Activated CD4-positive, alpha-beta memory T cell treated with anti-CD3 and anti-CD28 coated beads for 36 hours (primary cell): ENCODE measurements at regions of chr9 and their contacts with region 1.

Region 1: DNA sequence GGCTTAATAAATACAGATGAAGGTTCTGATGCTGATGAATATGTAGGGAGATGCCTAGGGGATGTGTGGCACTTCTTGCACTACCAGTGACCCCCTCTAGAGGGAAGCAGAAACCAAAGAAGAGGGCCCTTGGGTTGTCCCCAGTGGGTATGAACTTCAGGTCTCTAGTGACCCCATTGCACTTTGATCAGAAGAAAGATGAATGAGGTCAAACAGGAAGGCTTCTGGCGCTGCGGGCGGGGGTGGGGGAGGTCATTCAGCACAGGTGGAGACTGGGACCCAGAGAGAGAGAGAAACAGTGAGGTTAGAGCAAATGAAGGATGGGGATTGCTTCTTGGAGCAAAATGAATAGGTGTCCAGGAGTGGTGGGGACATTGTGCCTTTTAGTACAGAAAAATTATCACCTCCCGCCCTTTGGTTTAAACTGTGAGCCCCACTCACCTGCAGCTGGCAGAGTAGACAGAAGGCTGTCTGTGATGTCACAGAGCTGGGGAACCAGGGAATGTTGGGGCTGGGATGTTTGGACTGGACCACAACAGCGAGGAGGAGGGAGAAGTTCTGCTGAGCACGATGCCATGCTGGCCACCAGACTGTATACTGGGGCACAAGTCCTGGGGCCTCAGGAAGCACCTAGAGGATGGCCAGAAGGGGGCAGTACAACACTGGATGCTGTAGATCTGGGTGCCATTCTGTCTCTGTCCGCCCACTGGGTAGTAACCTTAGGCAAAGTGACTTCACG is at the start of gene TEX48:
- DNase-seq: peak; percentile 90
- H3K4me3 Mint-ChIP-seq: peak within 1 kb of the TSS; percentile 40
- H3K27ac Mint-ChIP-seq: peak within 1 kb of the TSS; percentile 76
- H3K4me1 Mint-ChIP-seq: peaks cover 50% of the 10 kb centered on the region
- H3K27me3 Mint-ChIP-seq: peaks cover 6% of the 10 kb centered on the region
- total RNA-seq, gene TEX48: 0.57 to 1.2 TPM

Region 2: GRCh38 chr9:114662081-114662989 is 19.4 kb before region 1 on chr9:
- CTCF ChIA-PET with region 1: interaction called, 14 read pairs
- POLR2A ChIA-PET with region 1: no interaction called
- intact Hi-C with region 1: loop called (anchors 1 kb)
- DNase-seq: peak; percentile 74
- H3K4me3 Mint-ChIP-seq: no peak overlapping the region
- H3K27ac Mint-ChIP-seq: no peak overlapping the region
- H3K4me1 Mint-ChIP-seq: peaks cover 10% of the 10 kb centered on the region
- H3K27me3 Mint-ChIP-seq: peaks cover 7% of the 10 kb centered on the region

Region 3: GRCh38 chr9:114718801-114719221 is 37.0 kb after region 1 on chr9:
- CTCF ChIA-PET with region 1: interaction called, 7 read pairs
- POLR2A ChIA-PET with region 1: interaction called, 3 read pairs
- intact Hi-C with region 1: loop called (anchors 1 kb)
- DNase-seq: peak; percentile 97
- H3K4me3 Mint-ChIP-seq: peak overlapping the region; percentile 17
- H3K27ac Mint-ChIP-seq: peak overlapping the region; percentile 80
- H3K4me1 Mint-ChIP-seq: peaks cover 63% of the 10 kb centered on the region
- H3K27me3 Mint-ChIP-seq: no peaks in the 10 kb centered on the region

Region 4: DNA sequence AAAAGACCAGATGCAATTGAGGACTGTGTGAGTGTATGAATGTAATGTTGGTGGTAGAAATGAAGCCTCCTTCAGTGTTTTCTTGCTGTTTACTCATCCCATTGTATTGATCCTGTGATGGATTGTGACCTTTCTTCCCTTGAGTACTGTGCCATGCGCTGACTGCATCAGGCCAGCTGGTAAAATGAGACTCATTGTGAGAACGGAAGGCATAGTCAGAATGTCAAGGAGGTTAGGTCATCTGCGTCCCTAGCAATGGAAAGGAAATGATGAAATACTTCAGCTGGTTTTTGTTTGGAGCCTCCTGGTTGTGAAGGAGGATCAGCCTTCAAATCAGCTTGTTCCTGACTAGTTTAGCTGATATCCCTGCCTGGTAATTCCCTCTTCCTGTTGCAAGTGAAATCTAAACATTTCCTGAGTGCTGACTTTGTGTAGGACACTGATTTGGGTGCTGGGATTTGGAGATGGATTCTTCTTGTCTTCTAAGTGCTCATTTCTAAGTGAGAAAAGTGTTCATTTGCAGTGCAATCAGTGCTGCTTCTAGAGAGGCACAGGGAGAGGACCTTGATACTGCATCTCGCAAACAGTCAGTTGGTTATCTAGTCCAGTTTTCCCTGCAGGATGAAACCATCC is 213.2 kb after region 1 on chr9:
- CTCF ChIA-PET with region 1: interaction called, 19 read pairs
- POLR2A ChIA-PET with region 1: interaction called, 6 read pairs
- intact Hi-C with region 1: no loop called
- DNase-seq: peak; percentile 76
- H3K4me3 Mint-ChIP-seq: no peak overlapping the region
- H3K27ac Mint-ChIP-seq: peak overlapping the region; percentile 77
- H3K4me1 Mint-ChIP-seq: peaks cover 52% of the 10 kb centered on the region
- H3K27me3 Mint-ChIP-seq: no peaks in the 10 kb centered on the region

Region 5: GRCh38 chr9:115000217-115000639 is 318.5 kb after region 1 on chr9:
- CTCF ChIA-PET with region 1: interaction called, 103 read pairs
- POLR2A ChIA-PET with region 1: no interaction called
- intact Hi-C with region 1: no loop called
- DNase-seq: peak; percentile 71
- H3K4me3 Mint-ChIP-seq: peak overlapping the region; percentile 72
- H3K27ac Mint-ChIP-seq: peak overlapping the region; percentile 85
- H3K4me1 Mint-ChIP-seq: peaks cover 73% of the 10 kb centered on the region
- H3K27me3 Mint-ChIP-seq: no peaks in the 10 kb centered on the region

Region 6: GRCh38 chr9:115524453-115525059 is 842.8 kb after region 1 on chr9:
- CTCF ChIA-PET with region 1: interaction called, 11 read pairs
- POLR2A ChIA-PET with region 1: no interaction called
- intact Hi-C with region 1: no loop called
- DNase-seq: no peak
- H3K4me3 Mint-ChIP-seq: no peak overlapping the region
- H3K27ac Mint-ChIP-seq: no peak overlapping the region
- H3K4me1 Mint-ChIP-seq: no peaks in the 10 kb centered on the region
- H3K27me3 Mint-ChIP-seq: peaks cover 11% of the 10 kb centered on the region